Heart right ventricle (tissue), 16 donors: ENCODE measurements at regions of chr11 and their contacts with region 1.

Region 1: GRCh38 chr11:126268708-126269579 is at the starts of genes FOXRED1 and SRPRA:
- DNase-seq: peak; percentile 100
- ATAC-seq: peak; percentile 99 to 100 (median 100)
- H3K4me3 ChIP-seq: peak within 1 kb of the TSS; percentile 76 to 97 (median 89)
- H3K27ac ChIP-seq: peak within 1 kb of the TSS; percentile 70 to 95 (median 93)
- H3K4me1 ChIP-seq: peaks cover 5 to 26% (median 21%) of the 10 kb centered on the region in 9 donors
- H3K27me3 ChIP-seq: no peaks in the 10 kb centered on the region
- CTCF ChIP-seq: no peak
- total RNA-seq, gene FOXRED1: 19.0 to 41.1 (median 30.4) TPM
- total RNA-seq, gene SRPRA: 65.4 to 88.4 (median 75.1) TPM

Region 2: GRCh38 chr11:125923012-125923579 is 345.8 kb before region 1 on chr11:
- intact Hi-C with region 1: loop called in 2 of 10 experiments (anchors 10 kb)
- DNase-seq: peak; percentile 24 to 68
- ATAC-seq: peak in 7 of 8 donors; percentile 76 to 87 (median 81)
- H3K4me3 ChIP-seq: no peak overlapping the region
- H3K27ac ChIP-seq: no peak overlapping the region
- H3K4me1 ChIP-seq: no peaks in the 10 kb centered on the region
- H3K27me3 ChIP-seq: peaks cover 0 to 17% (median 0%) of the 10 kb centered on the region in 7 donors
- CTCF ChIP-seq: peak; percentile 62 to 87 (median 79)

Region 3: GRCh38 chr11:126211235-126212088 is 57.5 kb before region 1 on chr11 and contains the starts of genes FAM118B and RPUSD4:
- intact Hi-C with region 1: loop called in 7 of 10 experiments (anchors 5 to 10 kb)
- DNase-seq: peak; percentile 98 to 99
- ATAC-seq: peak; percentile 98 to 100 (median 100)
- H3K4me3 ChIP-seq: peak within 1 kb of the TSS; percentile 79 to 99 (median 92)
- H3K27ac ChIP-seq: peak within 1 kb of the TSS in 9 of 10 donors; percentile 9 to 90 (median 79)
- H3K4me1 ChIP-seq: peaks cover 4 to 56% (median 42%) of the 10 kb centered on the region in 9 donors
- H3K27me3 ChIP-seq: no peaks in the 10 kb centered on the region
- CTCF ChIP-seq: peak in 1 of 9 donors; percentile 5
- total RNA-seq, gene FAM118B: 18.3 to 52.8 (median 24.7) TPM
- total RNA-seq, gene RPUSD4: 34.5 to 70.0 (median 37.4) TPM

Region 4: DNA sequence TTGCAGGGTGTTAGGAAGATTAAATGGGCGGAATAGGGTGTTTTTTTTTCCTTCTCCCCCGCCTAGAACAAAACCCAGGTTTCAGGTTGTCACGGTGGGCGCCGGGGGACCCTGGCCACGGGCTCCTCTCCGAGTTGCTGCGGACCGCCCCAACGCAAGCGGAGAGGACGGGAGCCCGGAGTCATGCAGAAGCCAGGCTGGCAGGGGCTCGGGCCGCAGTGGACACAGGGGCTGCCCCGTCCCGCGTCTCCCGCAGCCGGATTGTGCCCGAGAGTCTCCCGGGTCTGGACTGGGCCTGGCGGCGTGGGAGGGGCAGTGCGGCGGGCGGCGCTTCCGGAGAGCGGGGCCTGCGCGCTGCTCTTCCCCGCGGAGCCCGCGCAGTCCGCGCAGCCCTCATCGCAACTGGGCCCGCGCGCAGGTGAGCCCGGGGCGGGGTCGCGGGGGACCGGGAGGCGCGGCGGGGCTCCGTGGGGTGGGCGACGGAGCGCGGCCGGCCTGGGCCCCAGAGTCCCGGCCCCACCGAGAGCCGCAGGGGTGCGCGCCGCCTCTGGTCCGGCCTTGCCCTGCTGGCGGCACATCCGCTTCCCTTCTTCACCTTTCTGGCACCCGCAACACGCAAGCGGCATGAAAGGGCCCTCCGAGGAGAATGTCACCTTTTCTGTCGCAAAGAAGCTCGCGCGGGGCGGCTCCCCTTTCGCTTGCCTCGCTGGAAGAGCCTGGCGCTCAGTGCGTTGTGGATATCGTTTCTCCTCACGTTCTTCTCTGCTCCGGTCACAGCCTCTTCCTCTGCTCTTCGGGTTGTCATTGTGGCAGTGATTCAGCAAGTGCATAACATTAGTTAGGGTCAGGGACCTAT is 14.0 kb after region 1 on chr11 and contains the start of gene TIRAP:
- intact Hi-C with region 1: loop called in 1 of 10 experiments (anchors 2 kb)
- DNase-seq: peak; percentile 69 to 79
- ATAC-seq: peak; percentile 89 to 95 (median 92)
- H3K4me3 ChIP-seq: peak within 1 kb of the TSS; percentile 49 to 87 (median 78)
- H3K27ac ChIP-seq: peak within 1 kb of the TSS; percentile 55 to 97 (median 93)
- H3K4me1 ChIP-seq: peaks cover 0 to 51% (median 11%) of the 10 kb centered on the region in 9 donors
- H3K27me3 ChIP-seq: no peaks in the 10 kb centered on the region
- CTCF ChIP-seq: peak in 1 of 9 donors; percentile 35
- total RNA-seq, gene TIRAP: 6.3 to 10.1 (median 8.6) TPM